CD14-positive monocyte (primary cell): ENCODE measurements at regions of chr6 and their contacts with region 1.

Region 1: GRCh38 chr6:2853761-2854395 is 12.2 kb upstream of the SERPINB1 start:
- DNase-seq: peak; percentile 91 to 99 (median 98)
- H3K4me3 ChIP-seq: peak overlapping the region in 1 of 3 experiments; percentile 43
- H3K4me3 Mint-ChIP-seq: peak overlapping the region; percentile 68 to 90
- H3K27ac ChIP-seq: peak overlapping the region; percentile 89 to 99
- H3K27ac Mint-ChIP-seq: peak overlapping the region; percentile 97 to 100 (median 99)
- H3K4me1 ChIP-seq: peaks cover 66% of the 10 kb centered on the region in 2 donors
- H3K4me1 Mint-ChIP-seq: peaks cover 69% of the 10 kb centered on the region
- H3K27me3 ChIP-seq: no peaks in the 10 kb centered on the region
- H3K27me3 Mint-ChIP-seq: peaks cover 0 to 2% (median 0%) of the 10 kb centered on the region in 3 donors
- CTCF ChIP-seq: peak; percentile 50

Region 2: DNA sequence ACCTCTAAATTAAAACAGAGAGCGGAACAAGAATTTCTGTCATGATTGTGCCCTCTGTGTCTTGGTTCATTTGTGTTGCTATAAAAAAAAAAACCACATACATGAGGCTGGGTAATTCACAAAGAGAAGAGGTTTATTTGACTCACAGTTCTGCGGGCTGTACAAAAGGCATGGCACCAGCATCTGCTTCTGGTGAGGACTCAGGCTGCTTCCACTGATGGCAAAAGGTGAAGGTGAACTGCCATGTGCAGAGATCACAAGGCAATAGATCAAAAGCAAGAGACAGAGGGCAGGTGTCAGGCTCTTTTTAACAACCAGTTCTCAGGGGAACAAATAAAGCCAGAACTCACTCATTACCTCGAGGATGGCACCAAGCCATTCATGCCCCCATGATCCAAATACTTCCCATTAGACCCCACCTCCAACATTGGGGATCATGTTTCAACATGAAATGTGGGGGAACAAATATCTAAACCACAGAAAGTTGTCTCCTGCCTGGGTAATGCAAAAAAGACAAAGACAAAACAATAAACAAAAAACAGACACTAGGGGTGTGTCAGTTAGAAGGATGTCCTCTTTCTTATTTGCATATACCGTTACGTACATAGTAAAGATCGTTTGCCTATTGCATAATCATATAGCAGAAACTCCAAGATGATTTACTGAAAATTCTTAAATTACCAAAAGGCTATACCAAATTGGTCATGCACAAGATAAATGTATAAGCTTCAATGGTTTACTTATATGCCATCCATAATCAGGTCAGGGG is 32.3 kb after region 1 on chr6:
- intact Hi-C with region 1: loop called (anchors 5 to 10 kb)
- DNase-seq: peak; percentile 45 to 83 (median 75)
- H3K4me3 ChIP-seq: no peak overlapping the region
- H3K4me3 Mint-ChIP-seq: no peak overlapping the region
- H3K27ac ChIP-seq: peak overlapping the region in 1 of 2 donors; percentile 55
- H3K27ac Mint-ChIP-seq: peak overlapping the region; percentile 75 to 88 (median 82)
- H3K4me1 ChIP-seq: peaks cover 10 to 40% of the 10 kb centered on the region in 2 donors
- H3K4me1 Mint-ChIP-seq: peaks cover 41% of the 10 kb centered on the region
- H3K27me3 ChIP-seq: no peaks in the 10 kb centered on the region
- H3K27me3 Mint-ChIP-seq: no peaks in the 10 kb centered on the region
- CTCF ChIP-seq: no peak

Region 3: GRCh38 chr6:2917065-2917464 is 63.2 kb after region 1 on chr6:
- intact Hi-C with region 1: no loop called
- DNase-seq: no peak
- H3K4me3 ChIP-seq: no peak overlapping the region
- H3K4me3 Mint-ChIP-seq: no peak overlapping the region
- H3K27ac ChIP-seq: no peak overlapping the region
- H3K27ac Mint-ChIP-seq: peak overlapping the region in 1 of 7 donors; percentile 58
- H3K4me1 ChIP-seq: peaks cover 14 to 16% of the 10 kb centered on the region in 2 donors
- H3K4me1 Mint-ChIP-seq: peaks cover 19% of the 10 kb centered on the region
- H3K27me3 ChIP-seq: no peaks in the 10 kb centered on the region
- H3K27me3 Mint-ChIP-seq: peaks cover 0 to 6% (median 5%) of the 10 kb centered on the region in 3 donors
- CTCF ChIP-seq: peak; percentile 28